OCI-LY7 (cell line): ENCODE measurements at regions of chr10 and their contacts with region 1.

Region 1: DNA sequence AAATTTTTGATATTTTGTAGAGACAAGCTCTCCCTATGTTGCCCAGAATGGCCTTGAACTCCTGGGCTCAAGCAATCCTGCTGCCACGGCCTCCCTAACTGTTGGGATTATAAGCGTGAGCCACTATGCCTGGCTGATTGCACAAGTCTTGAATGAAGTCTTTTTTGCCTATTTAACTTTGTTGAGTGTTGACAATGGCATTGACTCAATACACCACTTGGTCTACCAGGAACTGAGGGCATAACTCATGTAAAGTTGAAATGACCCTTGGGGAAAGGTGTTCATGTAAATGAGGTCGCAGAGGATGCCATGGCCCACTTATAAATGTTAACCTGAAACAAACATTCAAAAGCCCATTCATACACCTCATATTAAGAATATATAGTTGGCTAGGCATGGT is 7.4 kb upstream of the UCMA start:
- DNase-seq: no peak
- H3K4me3 ChIP-seq: no peak overlapping the region
- H3K27ac ChIP-seq: no peak overlapping the region
- H3K4me1 ChIP-seq: no peaks in the 10 kb centered on the region
- CTCF ChIP-seq: no peak

Region 2: DNA sequence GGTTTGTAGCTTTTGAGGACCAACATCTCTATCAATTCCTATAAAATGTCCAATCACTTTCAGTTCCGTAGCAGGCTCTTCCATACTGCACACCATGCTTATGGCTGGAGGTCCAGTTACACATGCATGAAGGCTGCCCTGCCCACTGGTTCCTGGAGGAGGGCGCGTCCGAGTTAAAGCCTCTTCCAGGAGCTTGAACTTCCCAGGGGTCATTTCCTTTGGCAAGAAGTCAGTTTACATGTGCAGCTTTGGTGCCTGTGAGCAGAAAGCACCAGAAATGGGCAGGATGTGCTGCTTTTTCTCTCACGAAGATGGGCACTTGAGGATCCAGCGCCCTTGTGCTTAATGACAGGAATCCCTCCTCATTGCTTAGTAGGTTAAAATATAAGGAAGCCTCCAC is 75.9 kb after region 1 on chr10:
- CTCF ChIA-PET with region 1: no interaction called
- POLR2A ChIA-PET with region 1: interaction called, 10 read pairs
- intact Hi-C with region 1: no loop called
- DNase-seq: no peak
- H3K4me3 ChIP-seq: no peak overlapping the region
- H3K27ac ChIP-seq: no peak overlapping the region
- H3K4me1 ChIP-seq: no peaks in the 10 kb centered on the region
- CTCF ChIP-seq: no peak

Region 3: GRCh38 chr10:13348216-13349017 is 106.8 kb after region 1 on chr10 and contains the start of gene SEPHS1:
- CTCF ChIA-PET with region 1: no interaction called
- POLR2A ChIA-PET with region 1: no interaction called
- intact Hi-C with region 1: no loop called
- DNase-seq: peak; percentile 92
- H3K4me3 ChIP-seq: peak within 1 kb of the TSS; percentile 86
- H3K27ac ChIP-seq: peak within 1 kb of the TSS; percentile 95
- H3K4me1 ChIP-seq: peaks cover 44% of the 10 kb centered on the region
- CTCF ChIP-seq: 0 out of 2 replicates have a peak, but pooled peaks have one; percentile 36
- total RNA-seq, gene SEPHS1: 72.7 and 115 TPM in 2 replicates